Sciatic nerve (tissue), 2 donors: ENCODE measurements at regions of chr6 and their contacts with region 1.

Region 1: DNA sequence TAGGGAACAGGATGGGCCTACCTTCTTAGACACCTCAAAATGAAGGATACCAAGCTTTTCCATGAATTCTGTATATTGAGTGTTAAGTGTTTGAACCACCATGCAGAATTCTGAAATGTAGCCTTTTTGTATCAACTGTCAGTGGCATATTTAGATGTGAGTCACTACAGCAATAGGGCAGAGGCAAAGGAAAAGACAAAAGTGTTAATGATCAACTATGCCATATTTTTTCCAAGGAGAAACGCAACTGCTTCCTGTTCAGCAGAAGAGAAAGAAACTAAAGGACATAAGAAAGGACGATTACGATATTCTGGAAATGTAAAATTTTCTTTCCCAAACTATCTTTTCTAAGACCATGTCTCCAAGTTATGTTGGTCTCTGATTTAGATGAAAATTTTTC is 104.6 kb upstream of the RSPO3 start:
- DNase-seq: no peak
- ATAC-seq: no peak

Region 2: GRCh38 chr6:127792616-127793015 is 778.8 kb after region 1 on chr6:
- intact Hi-C with region 1: loop called (anchors 10 kb)
- DNase-seq: no peak
- ATAC-seq: no peak

Region 3: GRCh38 chr6:128929871-128930270 is 1916.0 kb after region 1 on chr6:
- intact Hi-C with region 1: no loop called
- DNase-seq: no peak
- ATAC-seq: no peak